Prostate gland (tissue), 2 donors: ENCODE measurements at regions of chr18 and their contacts with region 1.

Region 1: DNA sequence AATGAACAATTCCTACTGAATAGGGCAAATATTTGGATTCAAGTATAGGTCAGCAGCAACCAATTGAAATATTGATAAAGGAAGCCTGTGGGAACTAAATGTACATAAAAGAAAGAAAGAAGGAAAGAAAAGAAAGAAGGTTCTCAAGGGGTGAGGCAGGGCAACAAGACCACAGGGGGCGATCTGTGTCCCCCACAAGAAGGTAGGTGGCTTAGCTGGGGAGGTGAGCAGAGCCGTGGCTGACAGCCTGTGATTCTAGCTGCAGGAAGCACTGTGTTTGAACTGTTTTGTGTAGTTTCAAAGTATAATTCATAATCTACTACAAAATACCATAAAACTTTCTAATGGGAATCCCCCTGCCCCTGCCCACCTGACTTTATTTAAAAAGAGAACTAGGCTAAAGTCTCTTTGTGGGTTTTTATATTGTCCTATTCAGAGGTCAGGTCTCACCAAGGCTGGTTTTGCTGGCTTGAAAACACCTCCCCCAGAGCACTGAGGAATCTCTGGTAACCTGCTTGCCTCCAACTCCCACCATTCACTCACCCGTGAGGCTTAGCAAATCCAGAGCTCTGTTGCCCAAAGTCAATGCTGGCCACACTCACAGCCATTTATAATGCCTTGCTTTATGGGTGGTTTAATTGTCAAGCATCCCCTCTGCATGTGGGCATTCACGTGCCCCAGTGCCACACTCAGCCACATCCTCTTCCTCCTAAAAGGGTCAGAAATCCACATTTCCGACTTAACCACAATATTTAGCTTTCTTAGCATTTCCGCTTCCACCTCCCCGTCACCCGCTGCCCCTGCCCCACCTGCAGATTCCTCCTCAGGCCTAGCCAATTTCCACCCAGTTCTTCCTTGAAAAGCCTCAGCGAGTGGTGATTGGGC is 36.4 kb upstream of the LMAN1 start:
- DNase-seq: no peak
- H3K4me3 ChIP-seq: no peak overlapping the region
- H3K27ac ChIP-seq: no peak overlapping the region
- H3K4me1 ChIP-seq: no peaks in the 10 kb centered on the region
- H3K27me3 ChIP-seq: no peaks in the 10 kb centered on the region
- CTCF ChIP-seq: no peak
- POLR2A ChIP-seq: no peak

Region 2: GRCh38 chr18:59249205-59249774 is 146.2 kb before region 1 on chr18:
- intact Hi-C with region 1: loop called (anchors 5 kb)
- DNase-seq: peak; percentile 45
- H3K4me3 ChIP-seq: no peak overlapping the region
- H3K27ac ChIP-seq: no peak overlapping the region
- H3K4me1 ChIP-seq: no peaks in the 10 kb centered on the region
- H3K27me3 ChIP-seq: no peaks in the 10 kb centered on the region
- CTCF ChIP-seq: peak; percentile 14 to 66 (median 49)
- POLR2A ChIP-seq: no peak